ENCODE measurements at regions of chr9 and their contacts with region 1.

Region 1: DNA sequence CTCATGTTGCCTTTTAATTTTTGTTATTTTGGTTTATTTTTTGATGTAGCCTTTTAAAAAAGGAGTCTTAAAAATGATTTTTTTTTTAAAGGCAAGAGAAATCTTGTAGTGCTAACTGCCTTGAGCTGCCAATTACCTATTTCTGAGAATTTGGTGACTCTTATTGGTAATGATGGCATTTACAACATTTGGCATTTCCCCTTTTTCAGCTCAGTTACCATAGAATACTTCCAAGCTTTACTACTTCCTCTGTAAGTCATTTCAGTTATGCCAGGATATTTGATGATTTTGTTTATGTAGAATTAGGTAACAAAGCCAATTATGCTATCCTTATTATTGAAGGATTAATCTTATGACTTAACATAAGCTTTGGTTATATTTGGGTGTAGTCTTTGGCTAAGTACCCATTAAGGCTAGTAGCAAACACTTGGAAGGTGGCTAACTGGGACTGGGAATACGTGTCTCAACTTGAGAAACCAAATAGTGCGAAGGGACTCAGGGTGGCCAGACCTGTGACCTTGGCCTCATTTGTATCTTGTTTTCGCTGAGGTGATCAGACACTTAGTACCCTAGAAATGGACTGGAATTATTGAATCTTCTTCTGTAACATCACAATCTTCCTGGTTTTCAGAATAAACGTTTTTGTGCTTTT is 27.7 kb downstream of the CDC37L1 start:
- DNase-seq: no peak
- ATAC-seq: no peak
- H3K4me3 ChIP-seq: no peak overlapping the region
- H3K4me3 Mint-ChIP-seq: no peak overlapping the region
- H3K27ac ChIP-seq: no peak overlapping the region
- H3K27ac Mint-ChIP-seq: peak overlapping the region in 6 of 9 donors; percentile 17 to 75 (median 44)
- H3K4me1 ChIP-seq: no peaks in the 10 kb centered on the region
- H3K4me1 Mint-ChIP-seq: peaks cover 0 to 15% (median 7%) of the 10 kb centered on the region in 7 donors
- H3K27me3 ChIP-seq: no peaks in the 10 kb centered on the region
- H3K27me3 Mint-ChIP-seq: no peaks in the 10 kb centered on the region

Region 2: GRCh38 chr9:4515958-4516375 is 191.1 kb before region 1 on chr9:
- CTCF ChIA-PET with region 1: no interaction called
- POLR2A ChIA-PET with region 1: no interaction called
- intact Hi-C with region 1: no loop called
- DNase-seq: no peak
- ATAC-seq: no peak
- H3K4me3 ChIP-seq: no peak overlapping the region
- H3K4me3 Mint-ChIP-seq: no peak overlapping the region
- H3K27ac ChIP-seq: no peak overlapping the region
- H3K27ac Mint-ChIP-seq: peak overlapping the region in 2 of 9 donors; percentile 1 to 3
- H3K4me1 ChIP-seq: no peaks in the 10 kb centered on the region
- H3K4me1 Mint-ChIP-seq: peaks cover 0 to 12% (median 7%) of the 10 kb centered on the region in 7 donors
- H3K27me3 ChIP-seq: no peaks in the 10 kb centered on the region
- H3K27me3 Mint-ChIP-seq: peaks cover 0 to 7% (median 0%) of the 10 kb centered on the region in 5 donors

Region 3: DNA sequence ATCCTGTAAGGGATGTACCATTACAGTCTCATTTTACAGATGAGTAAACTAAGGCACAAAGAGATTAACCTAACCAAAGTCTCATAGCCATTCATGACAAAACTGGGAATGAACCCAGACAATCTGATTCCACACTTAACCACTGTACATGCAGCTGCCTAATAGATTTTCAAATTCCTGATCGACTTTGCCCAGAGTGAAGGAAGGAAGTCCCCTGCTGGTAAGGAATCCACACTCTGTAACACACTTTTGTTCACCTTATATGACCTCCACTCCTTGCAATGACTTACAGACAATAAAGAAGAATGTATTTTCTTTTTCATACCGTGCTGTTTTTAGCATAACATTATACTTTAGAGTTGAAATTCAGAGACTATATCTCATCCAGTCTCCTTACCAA is 76.3 kb before region 1 on chr9:
- CTCF ChIA-PET with region 1: no interaction called
- POLR2A ChIA-PET with region 1: no interaction called
- intact Hi-C with region 1: no loop called
- DNase-seq: peak in 1 of 9 donors; percentile 14
- ATAC-seq: no peak
- H3K4me3 ChIP-seq: no peak overlapping the region
- H3K4me3 Mint-ChIP-seq: no peak overlapping the region
- H3K27ac ChIP-seq: no peak overlapping the region
- H3K27ac Mint-ChIP-seq: no peak overlapping the region
- H3K4me1 ChIP-seq: no peaks in the 10 kb centered on the region
- H3K4me1 Mint-ChIP-seq: peaks cover 0 to 18% (median 6%) of the 10 kb centered on the region in 7 donors
- H3K27me3 ChIP-seq: no peaks in the 10 kb centered on the region
- H3K27me3 Mint-ChIP-seq: peaks cover 0 to 12% (median 0%) of the 10 kb centered on the region in 5 donors

Region 4: GRCh38 chr9:4689687-4690104 is 17.4 kb before region 1 on chr9:
- CTCF ChIA-PET with region 1: interaction called, 3 read pairs
- POLR2A ChIA-PET with region 1: interaction called, 3 read pairs
- intact Hi-C with region 1: loop called in 1 of 2 experiments (anchors 2 kb)
- DNase-seq: no peak
- ATAC-seq: no peak
- H3K4me3 ChIP-seq: no peak overlapping the region
- H3K4me3 Mint-ChIP-seq: no peak overlapping the region
- H3K27ac ChIP-seq: no peak overlapping the region
- H3K27ac Mint-ChIP-seq: peak overlapping the region in 7 of 9 donors; percentile 9 to 84 (median 61)
- H3K4me1 ChIP-seq: peaks cover 3 to 4% of the 10 kb centered on the region in 2 donors
- H3K4me1 Mint-ChIP-seq: peaks cover 18 to 74% (median 55%) of the 10 kb centered on the region in 7 donors
- H3K27me3 ChIP-seq: no peaks in the 10 kb centered on the region
- H3K27me3 Mint-ChIP-seq: no peaks in the 10 kb centered on the region

Region 5: DNA sequence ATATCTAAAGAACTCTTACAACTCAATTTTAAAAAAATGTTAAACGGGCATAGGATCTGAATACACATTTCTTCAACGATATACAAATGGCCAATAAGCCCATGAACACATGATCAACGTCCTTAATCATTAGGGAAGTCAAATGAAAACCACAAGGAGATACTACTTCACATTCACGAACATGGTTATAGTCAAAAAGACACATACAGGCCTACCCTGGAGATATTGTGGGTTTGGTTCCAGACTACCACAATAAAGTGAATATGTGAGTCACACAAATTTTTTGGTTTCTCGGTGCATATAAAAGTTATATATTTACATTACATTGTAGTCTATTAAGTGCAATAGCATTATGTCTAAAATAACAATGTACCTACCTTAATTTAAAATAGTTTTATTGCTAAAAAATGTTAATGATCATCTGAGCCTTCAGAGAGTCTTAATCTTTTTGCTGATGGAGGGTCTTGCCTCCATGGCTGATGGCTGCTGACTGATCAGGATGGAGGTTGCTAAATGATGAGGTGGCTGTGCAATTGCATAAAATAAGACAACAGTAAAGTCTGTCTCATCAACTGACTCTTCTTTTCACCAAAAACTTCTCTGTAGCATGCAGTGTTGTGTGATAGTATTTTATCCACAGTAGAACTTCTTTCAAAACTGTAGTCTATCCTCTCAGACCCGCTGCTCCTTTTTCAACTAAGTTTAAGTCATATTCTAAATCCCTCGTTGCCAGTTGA is 18.8 kb after region 1 on chr9:
- CTCF ChIA-PET with region 1: no interaction called
- POLR2A ChIA-PET with region 1: interaction called, 3 read pairs
- intact Hi-C with region 1: loop called in 1 of 2 experiments (anchors 2 kb)
- DNase-seq: no peak
- ATAC-seq: no peak
- H3K4me3 ChIP-seq: no peak overlapping the region
- H3K4me3 Mint-ChIP-seq: no peak overlapping the region
- H3K27ac ChIP-seq: no peak overlapping the region
- H3K27ac Mint-ChIP-seq: peak overlapping the region in 2 of 9 donors; percentile 43 to 62
- H3K4me1 ChIP-seq: no peaks in the 10 kb centered on the region
- H3K4me1 Mint-ChIP-seq: peaks cover 3 to 35% (median 25%) of the 10 kb centered on the region in 7 donors
- H3K27me3 ChIP-seq: no peaks in the 10 kb centered on the region
- H3K27me3 Mint-ChIP-seq: no peaks in the 10 kb centered on the region

Measured in naive thymus-derived CD4-positive, alpha-beta T cell (primary cell).